Left cardiac atrium (tissue), 4 donors: ENCODE measurements at regions of chr9 and their contacts with region 1.

Region 1: GRCh38 chr9:20978249-20978648 is 53.2 kb downstream of the HACD4 start:
- DNase-seq: no peak
- ATAC-seq: no peak

Region 2: DNA sequence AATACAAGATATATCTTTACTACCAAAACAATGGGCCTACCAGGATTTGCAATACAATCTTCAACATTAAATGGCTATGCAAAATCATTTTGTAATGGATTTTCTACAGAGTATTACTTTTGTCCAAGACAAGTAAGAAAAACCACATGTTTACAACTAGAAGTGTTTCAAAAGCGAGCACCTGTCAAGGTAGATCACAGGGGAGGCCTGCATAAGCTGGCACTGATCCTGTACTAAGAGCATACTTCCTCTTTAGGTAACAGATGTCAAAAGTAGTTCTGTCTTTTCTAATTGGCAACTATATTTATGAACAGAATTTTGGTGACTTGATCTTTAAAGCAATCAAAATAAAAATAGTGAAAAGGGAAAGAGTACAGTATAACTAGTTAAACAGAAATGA is 605.0 kb before region 1 on chr9:
- intact Hi-C with region 1: no loop called
- DNase-seq: no peak
- ATAC-seq: no peak

Region 3: GRCh38 chr9:21016701-21017491 is 38.6 kb after region 1 on chr9:
- intact Hi-C with region 1: loop called in 1 of 2 experiments (anchors 5 kb)
- DNase-seq: no peak
- ATAC-seq: no peak